Transverse colon (tissue), 4 donors: ENCODE measurements at regions of chr20 and their contacts with region 1.

Region 1: GRCh38 chr20:63940472-63941266 is 15.5 kb downstream of the UCKL1 start:
- DNase-seq: no peak
- H3K4me3 ChIP-seq: no peak overlapping the region
- H3K27ac ChIP-seq: peak overlapping the region in 1 of 4 donors; percentile 72
- H3K4me1 ChIP-seq: peaks cover 0 to 3% (median 0%) of the 10 kb centered on the region in 4 donors
- H3K27me3 ChIP-seq: no peaks in the 10 kb centered on the region
- CTCF ChIP-seq: no peak
- EP300 ChIP-seq: no peak
- POLR2A ChIP-seq: no peak

Region 2: DNA sequence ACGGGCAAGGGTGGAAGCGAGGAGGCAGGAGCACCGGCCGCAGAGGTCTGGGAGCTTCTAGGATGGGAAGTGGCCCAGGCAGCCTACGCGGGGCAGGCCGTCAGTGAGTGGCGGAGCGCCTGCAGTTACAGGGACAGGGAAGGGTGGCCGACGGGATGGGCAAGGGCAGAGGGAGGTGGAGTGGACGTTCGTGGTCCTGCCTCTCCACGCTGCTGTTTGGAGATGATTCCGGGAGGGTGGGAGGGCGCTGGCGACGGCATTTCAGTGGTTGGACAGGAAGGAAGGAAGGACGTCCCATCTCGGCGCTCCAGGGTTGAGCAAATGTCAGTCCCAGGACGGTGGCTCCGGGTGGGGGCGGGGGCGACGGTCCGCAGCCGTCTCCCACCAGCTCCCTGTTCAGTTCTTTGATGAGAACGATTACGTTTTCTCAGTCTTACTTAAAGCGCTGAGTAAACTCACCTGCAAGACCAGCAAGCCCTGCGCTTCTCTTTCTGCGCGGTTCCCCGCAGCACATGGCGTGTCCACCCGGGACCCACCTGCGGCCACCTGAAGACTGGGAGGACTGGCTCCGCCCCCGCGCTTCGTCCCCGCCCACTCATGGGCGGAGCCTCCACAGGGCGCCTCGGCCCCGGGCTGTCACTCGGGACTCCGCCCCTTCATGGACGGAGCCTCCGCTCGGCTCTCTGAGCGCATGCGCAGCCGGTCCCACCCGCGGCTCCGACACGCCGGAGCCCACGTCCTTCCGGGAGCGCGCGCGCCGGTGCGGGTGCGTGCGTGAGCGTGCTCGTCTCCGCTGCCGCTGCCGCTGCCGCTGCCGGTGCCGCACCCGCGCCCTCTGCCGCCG is 46.1 kb before region 1 on chr20 and contains the start of gene DNAJC5:
- in situ Hi-C with region 1: no loop called
- intact Hi-C with region 1: loop called (anchors 1 kb)
- DNase-seq: peak; percentile 97
- H3K4me3 ChIP-seq: peak within 1 kb of the TSS; percentile 63 to 86 (median 78)
- H3K27ac ChIP-seq: peak within 1 kb of the TSS; percentile 85 to 94 (median 92)
- H3K4me1 ChIP-seq: peaks cover 16 to 42% (median 25%) of the 10 kb centered on the region in 4 donors
- H3K27me3 ChIP-seq: no peaks in the 10 kb centered on the region
- CTCF ChIP-seq: no peak
- EP300 ChIP-seq: no peak
- POLR2A ChIP-seq: no peak
- total RNA-seq, gene DNAJC5: 59.9 to 77.3 (median 71.4) TPM

Region 3: DNA sequence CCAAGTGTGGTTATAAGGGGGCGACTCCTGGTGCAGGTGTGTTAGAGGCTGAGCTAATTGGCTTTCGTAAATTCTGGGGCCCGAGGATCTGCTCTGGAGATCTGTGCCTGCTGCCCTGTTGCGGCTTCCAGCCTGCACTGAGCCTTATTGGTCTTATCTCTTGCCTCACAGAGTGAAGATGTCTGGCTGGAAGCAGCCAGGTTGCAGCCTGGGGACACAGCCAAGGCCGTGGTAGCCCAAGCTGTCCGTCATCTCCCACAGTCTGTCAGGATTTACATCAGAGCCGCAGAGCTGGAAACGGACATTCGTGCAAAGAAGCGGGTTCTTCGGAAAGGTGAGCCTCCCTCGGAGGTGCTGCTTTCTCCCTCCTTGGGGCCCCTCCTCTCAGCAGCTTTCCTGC is 60.2 kb after region 1 on chr20:
- in situ Hi-C with region 1: no loop called
- intact Hi-C with region 1: no loop called
- DNase-seq: no peak
- H3K4me3 ChIP-seq: no peak overlapping the region
- H3K27ac ChIP-seq: no peak overlapping the region
- H3K4me1 ChIP-seq: no peaks in the 10 kb centered on the region
- H3K27me3 ChIP-seq: no peaks in the 10 kb centered on the region
- CTCF ChIP-seq: no peak
- EP300 ChIP-seq: no peak
- POLR2A ChIP-seq: no peak